HEK293T (cell line): ENCODE measurements at regions of chr1 and their contacts with region 1.

Region 1: DNA sequence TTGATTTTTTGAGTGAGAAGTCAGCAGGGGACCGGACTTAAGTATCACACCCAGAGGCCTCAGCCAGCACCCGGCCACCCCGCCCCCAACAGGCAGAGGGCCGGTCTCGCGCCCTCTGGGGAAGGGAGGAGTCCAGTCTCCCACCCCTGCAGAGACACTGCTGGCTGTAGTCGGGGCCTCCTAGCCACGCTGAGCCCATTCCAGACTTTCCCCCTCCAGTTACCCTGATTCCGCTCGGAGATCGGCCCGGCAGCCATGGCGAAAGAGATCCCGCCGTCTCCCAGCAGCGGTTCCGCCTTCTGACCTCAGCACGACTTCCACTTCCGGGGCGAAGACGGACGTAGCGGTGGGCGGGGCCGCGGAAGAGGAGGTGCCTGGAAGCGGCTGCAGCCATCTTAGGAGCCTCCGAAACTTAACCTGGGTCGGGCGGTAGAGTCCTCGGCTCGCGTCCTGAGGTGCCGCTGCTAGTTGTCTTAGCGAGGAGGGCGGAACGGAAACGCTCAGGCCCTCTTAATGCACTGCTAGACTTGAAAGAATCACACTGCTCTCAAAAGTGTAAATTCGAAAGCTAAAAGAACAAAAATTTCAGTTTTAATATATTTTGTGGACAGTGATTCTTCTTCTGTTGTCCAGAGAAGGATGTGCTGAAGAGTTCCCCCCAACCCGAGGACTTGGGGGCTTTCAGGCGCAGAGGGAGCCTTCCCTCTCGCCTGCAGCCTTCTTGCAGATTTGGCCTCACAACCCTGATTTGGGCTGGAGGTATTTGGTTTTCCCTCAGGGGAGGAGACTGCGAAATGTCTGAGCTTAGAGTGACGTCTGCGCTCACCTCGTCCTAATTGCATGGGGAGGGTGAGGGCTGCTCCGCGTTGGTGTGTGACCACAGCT is at the start of gene SF3B4:
- DNase-seq: peak; percentile 95

Region 2: DNA sequence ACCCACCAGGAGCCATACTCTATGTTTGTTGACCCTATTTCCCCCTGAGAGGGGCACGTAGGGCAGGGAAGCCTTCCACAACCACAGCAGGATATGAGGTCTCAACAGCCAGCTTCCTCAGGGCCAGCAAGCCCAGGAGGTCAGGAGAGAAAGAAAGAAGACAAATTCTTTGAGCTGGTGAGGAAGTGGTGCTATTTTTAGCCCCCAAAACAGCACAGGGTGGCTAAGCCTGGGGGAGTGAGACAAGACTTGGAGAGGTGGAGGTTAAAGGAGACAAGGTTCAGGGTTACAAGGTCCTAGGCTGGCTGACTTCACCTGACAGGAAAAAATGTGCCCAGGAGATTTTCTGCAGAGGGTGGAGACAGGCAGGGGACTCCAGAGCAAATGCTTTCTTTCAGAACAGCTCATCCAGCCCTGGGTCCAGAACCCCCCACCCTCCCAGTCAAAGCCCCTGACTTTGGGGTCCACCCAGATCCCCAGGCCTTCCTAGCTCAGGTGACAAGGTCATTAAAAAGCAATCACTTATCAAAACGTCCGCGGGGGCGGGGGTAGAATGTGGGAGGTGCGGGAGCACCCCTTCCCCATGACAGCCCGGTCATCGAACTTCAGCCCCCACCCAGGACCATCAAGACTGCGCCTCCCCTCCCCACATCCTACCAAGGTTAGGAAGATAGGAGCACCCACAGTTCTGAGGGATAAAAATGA is 11.4 kb before region 1 on chr1:
- CTCF ChIA-PET with region 1: no interaction called
- POLR2A ChIA-PET with region 1: interaction called, 13 read pairs
- DNase-seq: no peak

Region 3: DNA sequence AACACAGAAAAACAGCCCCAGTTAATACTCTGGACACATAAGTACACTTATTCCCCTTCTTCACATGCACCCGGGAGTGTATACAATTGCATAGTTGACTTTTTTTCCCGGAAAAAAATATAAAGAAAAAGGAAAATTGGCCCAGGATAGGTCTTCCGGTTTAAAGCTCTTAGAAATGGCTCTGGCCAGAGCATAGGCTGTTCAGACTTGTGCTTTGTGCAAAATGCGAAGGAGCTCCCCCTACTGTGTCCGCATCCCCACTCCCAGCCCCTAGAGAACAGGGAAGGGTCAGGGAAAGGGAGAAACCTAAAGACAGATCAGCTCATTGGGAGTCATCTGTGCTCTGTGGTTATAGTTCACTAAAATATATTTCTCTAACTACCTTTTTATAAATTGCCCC is 14.5 kb after region 1 on chr1:
- CTCF ChIA-PET with region 1: no interaction called
- POLR2A ChIA-PET with region 1: interaction called, 22 read pairs
- DNase-seq: peak; percentile 69

Region 4: GRCh38 chr1:150034336-150034735 is 106.6 kb after region 1 on chr1:
- CTCF ChIA-PET with region 1: no interaction called
- POLR2A ChIA-PET with region 1: no interaction called
- DNase-seq: no peak